ENCODE measurements at regions of chr5 and their contacts with region 1.

Region 1: DNA sequence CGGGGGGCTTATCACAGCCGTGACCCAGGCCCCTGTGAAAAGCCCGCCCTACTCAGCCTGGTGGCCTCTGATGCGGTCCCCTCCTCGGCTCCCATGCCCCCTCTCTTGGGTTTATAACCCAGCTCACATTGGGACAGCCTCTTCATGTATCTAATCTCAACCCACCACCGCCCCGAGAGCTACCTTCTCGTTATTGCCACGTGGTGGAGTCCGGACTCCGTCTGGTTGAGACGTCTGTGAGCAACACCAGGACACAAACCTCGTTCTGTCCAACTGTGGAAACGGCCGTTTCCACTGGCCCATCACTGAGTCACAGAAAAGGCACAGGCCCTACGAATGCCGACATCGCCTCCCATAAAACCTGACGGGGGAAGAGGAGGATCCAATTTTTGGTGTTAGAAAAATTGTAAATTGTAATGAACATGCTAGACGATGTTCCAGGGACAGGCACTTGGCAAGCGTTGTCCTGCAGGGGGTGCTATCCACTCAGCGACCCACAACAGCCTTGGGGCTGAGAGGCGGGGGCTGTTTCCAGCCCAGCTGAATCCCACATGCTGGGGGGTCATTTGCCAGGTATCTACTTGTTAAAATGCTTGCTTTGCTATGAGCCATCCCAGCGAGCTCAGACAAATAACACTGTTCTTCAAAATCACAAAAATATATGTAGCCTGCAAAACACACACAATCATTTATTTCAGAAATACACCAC is 37.3 kb upstream of the N4BP3 start:
- DNase-seq: peak; percentile 89

Region 2: GRCh38 chr5:178086276-178086675 is 10.3 kb after region 1 on chr5:
- CTCF ChIA-PET with region 1: interaction called, 11 read pairs
- POLR2A ChIA-PET with region 1: no interaction called
- DNase-seq: no peak

Region 3: DNA sequence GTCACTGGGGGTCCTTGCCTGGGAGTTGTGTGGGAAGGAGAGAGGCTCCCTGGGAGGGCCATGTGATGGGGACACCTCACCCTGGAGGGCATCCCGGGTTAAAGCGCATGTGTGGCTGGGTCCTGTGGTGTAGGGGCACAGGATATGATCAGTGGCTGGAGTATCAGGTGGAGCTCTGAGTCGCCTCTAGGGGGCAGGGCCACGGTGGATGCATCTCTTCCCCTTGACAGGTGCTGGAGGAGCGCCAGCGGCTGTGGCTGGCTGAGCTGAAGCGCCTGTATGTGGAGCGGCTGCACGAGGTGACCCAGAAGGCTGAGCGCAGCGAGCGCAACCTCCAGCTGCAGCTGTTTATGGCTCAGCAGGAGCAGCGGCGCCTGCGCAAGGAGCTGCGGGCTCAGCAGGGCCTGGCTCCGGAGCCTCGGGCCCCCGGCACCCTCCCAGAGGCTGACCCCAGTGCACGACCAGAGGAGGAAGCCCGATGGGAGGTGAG is 44.9 kb after region 1 on chr5:
- CTCF ChIA-PET with region 1: interaction called, 11 read pairs
- POLR2A ChIA-PET with region 1: interaction called, 4 read pairs
- DNase-seq: peak; percentile 92

Region 4: DNA sequence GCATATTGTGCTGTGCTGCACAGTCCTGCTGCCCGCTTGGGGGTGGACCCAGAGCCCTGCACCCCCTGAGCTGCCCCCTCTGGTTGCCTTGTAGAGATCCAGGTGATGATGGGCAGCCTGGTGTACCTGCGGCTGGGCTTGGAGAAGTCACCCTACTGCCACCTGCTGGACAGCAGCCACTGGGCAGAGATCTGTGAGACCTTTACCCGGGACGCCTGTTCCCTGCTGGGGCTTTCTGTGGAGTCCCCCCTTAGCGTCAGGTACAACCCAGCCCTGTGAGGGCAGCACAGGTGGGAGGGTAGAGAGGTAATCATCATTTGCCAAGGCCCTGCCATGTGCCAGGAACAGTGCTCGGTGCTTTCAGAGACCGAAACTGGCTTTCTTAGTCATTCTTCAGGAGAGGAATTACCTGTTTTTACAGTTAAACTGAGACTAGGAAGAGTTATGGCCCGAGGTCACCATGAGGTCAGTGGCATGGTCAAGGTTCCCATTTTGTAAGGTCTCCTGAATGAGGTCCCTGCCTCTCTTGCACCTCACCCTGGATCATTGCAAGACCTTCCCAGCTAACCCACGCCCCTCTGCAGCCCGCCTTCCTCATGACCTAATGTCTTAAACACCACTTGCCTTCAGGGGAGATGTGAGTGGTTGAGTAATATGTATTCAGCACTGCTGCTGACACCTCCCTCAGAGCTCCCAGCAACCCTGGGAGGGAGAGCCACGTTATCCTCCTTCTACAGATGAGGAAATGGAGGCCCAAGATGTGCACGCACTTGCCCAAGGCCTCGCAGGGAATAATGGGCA is 70.2 kb after region 1 on chr5:
- CTCF ChIA-PET with region 1: interaction called, 17 read pairs
- POLR2A ChIA-PET with region 1: interaction called, 6 read pairs
- DNase-seq: peak; percentile 77

Region 5: DNA sequence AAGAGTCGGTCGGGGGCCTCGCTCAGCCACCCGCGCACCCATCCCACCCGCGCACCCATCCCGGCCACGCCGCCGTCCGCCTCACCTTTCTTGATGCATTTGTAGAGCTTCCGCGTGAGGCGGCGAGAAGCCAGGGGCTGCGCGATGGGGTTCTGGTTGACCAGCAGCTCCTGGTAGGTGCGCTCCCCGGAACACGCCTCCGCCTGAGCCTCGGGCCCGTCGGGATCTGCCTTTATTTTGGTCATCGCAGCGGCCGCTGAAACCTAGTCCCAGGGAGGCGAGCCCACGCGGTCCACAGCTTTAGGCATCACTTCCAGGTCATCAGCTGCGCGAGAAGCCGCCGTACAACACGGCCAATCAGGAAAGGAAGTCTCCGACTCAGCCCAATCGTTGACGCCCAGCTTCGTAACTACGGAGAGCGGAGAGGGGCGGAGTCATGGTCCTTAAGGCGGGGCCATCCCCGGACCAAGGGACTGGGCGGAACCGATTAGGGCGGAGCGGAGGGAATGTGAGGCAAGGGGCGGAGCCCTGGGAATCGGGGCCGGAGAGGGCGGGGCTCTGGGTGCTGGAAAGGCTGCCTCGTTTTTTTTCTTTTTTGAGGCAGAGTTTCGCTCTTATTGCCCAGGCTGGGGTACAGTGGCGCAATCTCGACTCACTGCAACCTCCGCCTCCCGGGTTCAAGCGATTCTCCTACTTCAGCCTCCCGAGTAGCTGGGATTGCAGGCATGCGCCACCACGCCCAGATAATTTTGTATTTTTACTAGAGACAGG is 77.8 kb after region 1 on chr5 and contains the start of gene NHP2:
- CTCF ChIA-PET with region 1: interaction called, 30 read pairs
- POLR2A ChIA-PET with region 1: interaction called, 11 read pairs
- DNase-seq: peak; percentile 99

Region 6: DNA sequence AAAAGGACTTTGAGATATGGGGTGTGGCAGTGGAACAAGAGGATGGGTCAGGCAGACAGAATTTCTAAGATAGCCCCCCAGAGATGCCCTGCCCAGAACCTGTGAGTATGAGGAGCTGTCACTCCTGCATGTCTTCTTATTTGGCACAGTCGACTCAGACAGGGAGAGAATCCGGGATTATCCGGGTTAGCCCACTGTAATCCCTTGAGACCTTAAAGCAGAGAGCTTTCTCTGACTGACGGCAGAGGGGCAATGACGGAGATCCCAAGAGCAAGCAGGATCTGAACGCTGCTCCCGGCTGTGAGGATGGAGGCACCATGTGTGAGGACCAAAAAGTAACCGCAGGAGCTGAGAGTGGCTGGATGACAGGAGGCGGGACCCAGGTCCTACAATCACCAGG is 86.5 kb after region 1 on chr5:
- CTCF ChIA-PET with region 1: interaction called, 30 read pairs
- POLR2A ChIA-PET with region 1: no interaction called
- DNase-seq: no peak

Region 7: GRCh38 chr5:178279725-178280438 is 203.9 kb after region 1 on chr5:
- CTCF ChIA-PET with region 1: no interaction called
- POLR2A ChIA-PET with region 1: no interaction called
- DNase-seq: peak; percentile 92

Measured in HEK293T (cell line).